Common myeloid progenitor, CD34-positive (primary cell): ENCODE measurements at regions of chr11 and their contacts with region 1.

Region 1: GRCh38 chr11:113113801-113114706 is 152.8 kb downstream of the NCAM1 start:
- DNase-seq: peak; percentile 19 to 49 (median 29)
- H3K4me3 ChIP-seq: no peak overlapping the region
- H3K27ac ChIP-seq: no peak overlapping the region
- H3K4me1 ChIP-seq: no peaks in the 10 kb centered on the region
- H3K27me3 ChIP-seq: peaks cover 0 to 2% (median under 1%) of the 10 kb centered on the region in 5 experiments

Region 2: DNA sequence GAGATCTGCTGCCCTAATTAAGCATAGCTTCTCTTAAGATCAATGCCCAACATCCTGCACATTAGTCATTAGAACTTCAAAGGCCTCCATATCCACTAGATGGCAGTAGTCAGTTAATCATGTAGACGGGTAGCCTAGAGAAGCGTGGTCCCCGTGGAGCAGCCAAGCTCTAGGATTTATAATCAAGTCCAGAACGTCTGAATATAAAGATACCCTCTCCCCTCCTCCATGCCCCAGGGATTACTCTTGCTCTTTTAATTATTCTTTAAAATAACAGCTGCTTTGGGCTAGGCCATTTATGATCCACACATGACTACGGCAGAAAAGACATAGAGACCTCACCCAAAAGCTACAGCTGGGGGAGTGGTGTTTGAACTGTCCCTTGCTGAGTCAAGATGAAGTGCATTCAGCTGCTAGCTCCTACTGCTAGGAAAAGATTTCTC is 525.8 kb before region 1 on chr11:
- CTCF ChIA-PET with region 1: interaction called, 25 read pairs
- POLR2A ChIA-PET with region 1: no interaction called
- DNase-seq: peak; percentile 68 to 84 (median 76)
- H3K4me3 ChIP-seq: no peak overlapping the region
- H3K27ac ChIP-seq: no peak overlapping the region
- H3K4me1 ChIP-seq: no peaks in the 10 kb centered on the region
- H3K27me3 ChIP-seq: peaks cover 0 to 2% (median 0%) of the 10 kb centered on the region in 5 experiments

Region 3: DNA sequence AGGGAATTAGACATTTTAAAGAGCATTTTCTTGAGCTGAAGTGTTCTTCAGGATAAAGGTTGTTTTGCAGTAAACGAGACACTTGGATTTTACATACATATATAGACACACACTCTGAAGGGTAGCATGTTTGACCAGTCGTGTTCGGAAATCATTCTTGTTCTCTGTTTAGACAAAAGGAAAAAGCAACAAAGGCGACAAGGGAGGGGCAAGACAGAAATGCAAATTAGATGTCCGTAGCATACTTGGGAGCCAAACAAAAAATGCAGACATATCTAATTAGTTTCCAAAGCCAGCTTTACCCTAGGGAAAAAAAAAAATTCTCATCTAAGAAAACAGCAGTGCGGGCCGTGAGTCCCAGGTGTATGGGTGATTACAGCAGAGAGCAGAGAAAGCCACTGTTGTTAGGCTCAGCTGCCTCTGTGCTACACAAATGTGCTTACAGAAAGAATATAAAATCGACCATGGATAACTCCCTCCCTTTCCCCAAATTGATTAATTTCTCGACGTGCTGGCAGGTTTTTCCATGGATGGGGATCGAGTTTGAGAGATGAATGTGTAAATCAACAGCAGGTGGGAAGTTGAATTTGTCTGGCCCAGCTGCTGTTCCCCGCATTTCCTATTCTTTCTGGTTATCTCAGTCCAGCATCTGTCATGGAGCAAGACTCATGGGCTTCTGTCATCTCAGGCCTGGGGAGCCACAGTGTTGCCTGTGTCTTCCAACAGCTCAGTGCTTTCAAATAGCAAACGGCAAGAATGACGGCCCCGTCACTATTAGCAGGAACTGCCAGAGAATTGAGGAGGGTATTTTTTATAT is 23.9 kb after region 1 on chr11:
- CTCF ChIA-PET with region 1: no interaction called
- POLR2A ChIA-PET with region 1: no interaction called
- DNase-seq: peak; percentile 4 to 69 (median 50)
- H3K4me3 ChIP-seq: no peak overlapping the region
- H3K27ac ChIP-seq: no peak overlapping the region
- H3K4me1 ChIP-seq: peaks cover 0 to 6% (median 3%) of the 10 kb centered on the region in 4 experiments
- H3K27me3 ChIP-seq: peaks cover 0 to 8% (median 0%) of the 10 kb centered on the region in 5 experiments

Region 4: DNA sequence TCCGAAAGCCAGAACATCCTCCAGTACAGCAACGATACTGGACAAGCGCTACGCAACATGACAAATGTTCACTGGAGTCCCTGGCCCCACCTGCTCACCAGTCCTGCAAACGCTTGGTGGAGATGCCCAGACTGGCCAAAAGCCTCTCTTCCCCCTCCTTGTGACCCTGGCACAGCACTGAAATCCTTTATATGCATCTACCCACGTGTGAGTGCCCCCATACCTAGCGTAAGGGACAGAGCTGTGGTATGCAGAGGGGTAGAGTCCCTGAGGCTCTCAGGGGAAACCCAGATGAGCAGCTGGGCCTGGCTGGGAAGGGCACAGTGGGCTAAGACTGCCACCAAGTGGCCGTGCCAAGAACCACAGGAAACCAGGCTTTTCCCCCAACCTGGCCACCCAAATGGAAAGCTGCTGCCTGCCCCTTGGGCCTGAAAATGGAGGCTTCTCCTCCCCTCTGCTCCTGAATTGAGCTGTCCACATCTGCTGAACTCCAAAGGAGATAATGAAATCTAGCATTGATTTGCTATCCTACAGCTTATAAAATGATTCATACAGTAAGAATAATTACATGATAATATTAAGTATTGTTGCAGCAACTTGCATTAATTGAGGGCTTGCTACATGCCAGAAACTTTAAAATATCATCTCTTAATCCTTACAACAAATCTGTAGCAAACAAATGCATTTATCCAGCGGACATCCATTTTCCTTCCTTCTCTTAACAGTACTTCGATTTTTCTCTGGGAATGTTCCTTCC is 175.6 kb after region 1 on chr11:
- CTCF ChIA-PET with region 1: no interaction called
- POLR2A ChIA-PET with region 1: no interaction called
- DNase-seq: peak; percentile 31 to 71 (median 64)
- H3K4me3 ChIP-seq: no peak overlapping the region
- H3K27ac ChIP-seq: no peak overlapping the region
- H3K4me1 ChIP-seq: no peaks in the 10 kb centered on the region
- H3K27me3 ChIP-seq: peaks cover 0 to 7% (median 0%) of the 10 kb centered on the region in 5 experiments